ENCODE measurements at regions of chr4 and their contacts with region 1.

Region 1: GRCh38 chr4:15655229-15656037 is at the start of gene FBXL5:
- DNase-seq: peak; percentile 79 to 91 (median 87)
- H3K4me3 ChIP-seq: peak within 1 kb of the TSS; percentile 37 to 94
- H3K4me3 Mint-ChIP-seq: peak within 1 kb of the TSS; percentile 94 to 98 (median 97)
- H3K27ac ChIP-seq: peak within 1 kb of the TSS; percentile 88
- H3K27ac Mint-ChIP-seq: peak within 1 kb of the TSS; percentile 96 to 99 (median 98)
- H3K4me1 ChIP-seq: peaks cover 45% of the 10 kb centered on the region
- H3K4me1 Mint-ChIP-seq: peaks cover 32 to 57% (median 38%) of the 10 kb centered on the region in 4 donors
- H3K27me3 ChIP-seq: no peaks in the 10 kb centered on the region
- H3K27me3 Mint-ChIP-seq: no peaks in the 10 kb centered on the region
- total RNA-seq, gene FBXL5: 62.2 to 62.8 TPM

Region 2: DNA sequence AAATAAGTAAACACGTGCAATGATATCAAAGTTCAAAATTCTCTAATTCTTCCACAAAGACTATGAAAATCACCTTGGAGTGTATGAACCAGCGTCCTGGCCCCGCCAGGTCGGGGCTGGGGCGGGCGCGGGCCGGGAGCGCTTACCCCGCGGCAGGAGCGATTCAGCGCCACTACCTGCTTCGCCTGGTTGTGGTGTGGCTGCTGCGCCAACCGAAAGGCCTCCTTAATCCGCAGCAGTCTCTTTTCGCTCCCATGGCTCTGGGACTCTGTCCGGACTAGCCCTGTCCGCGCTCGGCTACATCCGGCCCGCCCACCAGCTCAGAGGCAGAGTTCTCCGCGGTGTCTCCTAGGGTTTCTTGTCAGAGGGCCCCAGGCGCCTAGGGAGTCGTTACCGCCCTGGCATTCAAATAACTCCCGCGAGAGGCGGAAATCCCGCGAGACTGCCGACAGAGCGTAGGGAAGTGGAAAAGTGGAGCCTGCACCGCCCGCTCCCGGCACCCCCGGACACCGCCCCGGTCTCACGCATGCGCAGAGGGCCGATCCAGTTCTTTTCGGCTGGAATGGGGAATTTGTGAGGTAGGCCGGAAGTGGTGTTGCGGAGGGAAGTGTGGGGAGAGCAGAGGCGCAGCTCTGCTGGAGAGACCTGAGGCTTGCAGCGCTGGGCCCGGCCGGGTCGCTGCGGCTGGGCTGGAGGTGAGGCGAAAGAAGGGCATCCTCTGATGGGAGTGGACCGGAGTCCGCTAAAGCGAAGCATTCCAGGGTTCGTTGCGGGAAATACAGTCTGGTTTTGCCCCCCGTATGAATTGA is 26.0 kb after region 1 on chr4 and contains the start of gene FAM200B:
- CTCF ChIA-PET with region 1: interaction called, 5 read pairs
- POLR2A ChIA-PET with region 1: interaction called, 41 read pairs
- intact Hi-C with region 1: loop called (anchors 1 kb)
- DNase-seq: peak; percentile 92 to 96 (median 93)
- H3K4me3 ChIP-seq: peak within 1 kb of the TSS; percentile 72 to 99
- H3K4me3 Mint-ChIP-seq: peak within 1 kb of the TSS; percentile 90 to 98 (median 96)
- H3K27ac ChIP-seq: peak within 1 kb of the TSS; percentile 70
- H3K27ac Mint-ChIP-seq: peak within 1 kb of the TSS; percentile 86 to 98 (median 97)
- H3K4me1 ChIP-seq: peaks cover 30% of the 10 kb centered on the region
- H3K4me1 Mint-ChIP-seq: peaks cover 26 to 46% (median 34%) of the 10 kb centered on the region in 4 donors
- H3K27me3 ChIP-seq: no peaks in the 10 kb centered on the region
- H3K27me3 Mint-ChIP-seq: no peaks in the 10 kb centered on the region
- total RNA-seq, gene FAM200B: 35.5 to 37.4 TPM

Region 3: GRCh38 chr4:15855804-15856475 is 200.5 kb after region 1 on chr4:
- CTCF ChIA-PET with region 1: no interaction called
- POLR2A ChIA-PET with region 1: no interaction called
- intact Hi-C with region 1: no loop called
- DNase-seq: no peak
- H3K4me3 ChIP-seq: no peak overlapping the region
- H3K4me3 Mint-ChIP-seq: no peak overlapping the region
- H3K27ac ChIP-seq: no peak overlapping the region
- H3K27ac Mint-ChIP-seq: no peak overlapping the region
- H3K4me1 ChIP-seq: no peaks in the 10 kb centered on the region
- H3K4me1 Mint-ChIP-seq: no peaks in the 10 kb centered on the region
- H3K27me3 ChIP-seq: no peaks in the 10 kb centered on the region
- H3K27me3 Mint-ChIP-seq: peaks cover 1 to 3% of the 10 kb centered on the region in 2 donors